Activated T-helper 1 cell treated with anti-CD3 and anti-CD28 coated beads, Interleukin-12 subunit alpha, Interleukin-12 subunit beta, Interleukin-2, Interleukin-4 antibody, amounts not matched to agents 30 ng/mL and 10 ng/mL and 1 ng/mL, durations not matched to agents 14 hours and 24 hours and 36 hours (primary cell): ENCODE measurements at regions of chr3 and their contacts with region 1.

Region 1: GRCh38 chr3:72375237-72376076 is 472.8 kb downstream of the SHQ1 start:
- DNase-seq: no peak
- H3K4me3 Mint-ChIP-seq: peak overlapping the region; percentile 32
- H3K27ac Mint-ChIP-seq: peak overlapping the region; percentile 92
- H3K4me1 Mint-ChIP-seq: peaks cover 48% of the 10 kb centered on the region
- H3K27me3 Mint-ChIP-seq: no peaks in the 10 kb centered on the region

Region 2: DNA sequence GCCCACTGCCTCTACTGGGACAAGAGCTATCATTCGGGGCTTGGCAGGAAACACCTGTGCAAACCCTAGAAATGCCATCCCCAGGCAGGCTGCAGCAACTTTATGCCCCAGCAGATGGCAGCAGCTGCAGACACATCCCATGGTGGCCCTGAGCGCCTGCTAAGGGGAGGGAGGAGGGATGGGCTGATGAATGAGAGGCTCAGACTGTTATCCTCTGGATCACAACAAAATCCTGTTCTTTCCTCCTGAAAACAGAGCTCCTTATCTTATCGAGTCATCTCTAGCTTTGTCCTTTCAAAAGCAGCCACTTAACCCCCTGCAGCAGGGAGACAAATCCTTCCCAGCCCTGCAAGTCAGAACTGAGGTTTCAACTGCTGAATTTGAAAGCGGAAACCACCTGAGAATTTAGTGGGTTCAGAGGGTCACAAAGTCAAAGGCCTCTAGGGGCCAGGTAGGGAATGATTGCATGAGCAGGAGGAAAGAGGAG is 500.0 kb before region 1 on chr3:
- intact Hi-C with region 1: loop called (anchors 1 kb)
- DNase-seq: peak; percentile 67
- H3K4me3 Mint-ChIP-seq: no peak overlapping the region
- H3K27ac Mint-ChIP-seq: peak overlapping the region; percentile 59
- H3K4me1 Mint-ChIP-seq: peaks cover 38% of the 10 kb centered on the region
- H3K27me3 Mint-ChIP-seq: peaks cover 8% of the 10 kb centered on the region

Region 3: DNA sequence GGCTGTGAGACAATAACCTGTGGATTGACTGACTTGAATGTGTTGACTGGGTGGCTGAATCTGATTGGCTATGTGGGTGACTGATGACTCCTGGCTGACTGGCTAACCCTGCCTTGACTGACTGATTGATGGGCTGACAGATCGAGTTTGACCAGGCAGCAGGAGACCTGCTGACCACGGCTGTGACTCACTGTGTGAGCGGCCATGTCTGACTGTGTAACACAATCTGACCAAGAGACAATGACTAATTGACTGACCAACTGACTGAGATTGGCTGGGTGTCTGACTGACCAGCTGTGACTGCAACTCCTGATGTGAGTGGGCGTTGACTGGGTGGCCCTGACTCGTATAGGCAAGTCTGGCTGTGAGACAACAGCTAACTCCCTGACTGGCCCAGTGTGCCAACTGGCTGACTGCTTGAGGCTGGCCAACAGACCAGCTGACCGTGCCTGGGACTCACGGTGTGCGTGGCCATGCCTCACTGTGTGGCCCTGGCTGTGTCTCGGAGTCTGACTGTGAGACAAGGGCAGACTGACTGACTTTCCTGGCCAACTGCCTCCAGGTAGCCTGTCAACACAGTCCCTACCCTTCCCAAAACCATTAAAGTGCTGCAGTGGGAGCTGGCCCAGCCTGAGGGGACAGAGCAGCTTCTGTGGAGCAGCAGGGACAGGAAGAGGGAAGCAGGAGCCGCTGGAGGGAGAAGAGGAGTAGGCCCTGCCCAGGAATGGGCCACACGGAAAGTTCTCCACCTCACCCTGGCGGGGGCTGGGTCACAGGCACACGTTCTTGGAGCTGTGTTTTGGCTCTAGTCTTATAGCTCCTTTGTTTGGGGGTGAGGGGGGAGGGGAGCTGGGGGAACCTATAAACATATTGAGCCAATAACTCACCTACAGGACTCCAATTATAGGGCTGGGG is 36.1 kb before region 1 on chr3:
- intact Hi-C with region 1: loop called (anchors 1 kb)
- DNase-seq: no peak
- H3K4me3 Mint-ChIP-seq: no peak overlapping the region
- H3K27ac Mint-ChIP-seq: no peak overlapping the region
- H3K4me1 Mint-ChIP-seq: peaks cover 32% of the 10 kb centered on the region
- H3K27me3 Mint-ChIP-seq: peaks cover under 1% of the 10 kb centered on the region

Region 4: GRCh38 chr3:72426618-72427397 is 51.4 kb after region 1 on chr3:
- intact Hi-C with region 1: loop called (anchors 1 kb)
- DNase-seq: no peak
- H3K4me3 Mint-ChIP-seq: peak overlapping the region; percentile 69
- H3K27ac Mint-ChIP-seq: peak overlapping the region; percentile 97
- H3K4me1 Mint-ChIP-seq: peaks cover 62% of the 10 kb centered on the region
- H3K27me3 Mint-ChIP-seq: no peaks in the 10 kb centered on the region

Region 5: DNA sequence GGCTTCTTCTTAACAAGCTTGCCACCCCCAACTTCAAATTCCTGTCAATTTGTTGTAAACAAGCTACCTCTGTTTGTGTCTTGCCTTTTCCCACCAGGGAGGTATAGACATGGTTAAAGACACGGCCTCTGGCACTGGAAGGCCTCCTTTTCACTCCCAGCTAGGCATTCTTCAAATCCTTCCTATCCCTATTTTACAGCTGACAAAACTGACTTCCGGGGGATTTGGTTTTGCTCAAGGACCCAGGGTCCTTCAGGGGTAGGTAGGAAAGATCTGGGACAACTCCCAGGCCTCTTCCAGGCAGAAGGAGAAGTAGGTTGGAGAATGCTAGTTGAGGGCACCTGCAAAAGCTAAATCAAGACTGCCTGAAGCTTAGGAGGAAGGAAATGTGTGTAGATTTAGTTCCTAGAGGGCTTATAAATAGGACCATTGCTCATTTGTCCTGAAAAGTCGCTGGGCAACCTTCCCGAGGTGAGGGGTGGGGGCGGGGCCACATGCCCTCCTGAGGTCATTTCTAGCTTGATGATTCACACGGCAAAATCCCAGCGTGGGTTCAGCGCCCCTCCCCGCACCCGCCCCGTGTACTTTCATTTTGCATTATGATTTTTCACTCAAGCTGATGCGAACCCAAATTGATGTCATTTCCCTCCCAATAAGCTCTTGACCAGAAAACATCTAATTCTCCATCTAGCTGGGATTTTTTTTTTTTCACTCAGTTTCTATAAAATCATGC is 107.3 kb after region 1 on chr3:
- intact Hi-C with region 1: loop called (anchors 1 kb)
- DNase-seq: peak; percentile 47
- H3K4me3 Mint-ChIP-seq: peak overlapping the region; percentile 68
- H3K27ac Mint-ChIP-seq: peak overlapping the region; percentile 94
- H3K4me1 Mint-ChIP-seq: peaks cover 73% of the 10 kb centered on the region
- H3K27me3 Mint-ChIP-seq: no peaks in the 10 kb centered on the region